Endothelial cell of umbilical vein (primary cell): ENCODE measurements at regions of chr18 and their contacts with region 1.

Region 1: GRCh38 chr18:70195852-70196434 is 9.5 kb downstream of the RTTN start:
- DNase-seq: peak; percentile 57
- H3K4me3 ChIP-seq: no peak overlapping the region
- H3K27ac ChIP-seq: no peak overlapping the region
- H3K4me1 ChIP-seq: no peaks in the 10 kb centered on the region
- H3K27me3 ChIP-seq: no peaks in the 10 kb centered on the region
- CTCF ChIP-seq: peak; percentile 62 to 64
- POLR2A ChIP-seq: no peak

Region 2: GRCh38 chr18:70172225-70172624 is 23.7 kb before region 1 on chr18:
- CTCF ChIA-PET with region 1: interaction called, 24 read pairs
- POLR2A ChIA-PET with region 1: interaction called, 8 read pairs
- dilution Hi-C with region 1: no loop called
- intact Hi-C with region 1: loop called (anchors 2 kb)
- DNase-seq: peak; percentile 27
- H3K4me3 ChIP-seq: no peak overlapping the region
- H3K27ac ChIP-seq: no peak overlapping the region
- H3K4me1 ChIP-seq: no peaks in the 10 kb centered on the region
- H3K27me3 ChIP-seq: no peaks in the 10 kb centered on the region
- CTCF ChIP-seq: peak; percentile 16 to 19
- POLR2A ChIP-seq: no peak

Region 3: DNA sequence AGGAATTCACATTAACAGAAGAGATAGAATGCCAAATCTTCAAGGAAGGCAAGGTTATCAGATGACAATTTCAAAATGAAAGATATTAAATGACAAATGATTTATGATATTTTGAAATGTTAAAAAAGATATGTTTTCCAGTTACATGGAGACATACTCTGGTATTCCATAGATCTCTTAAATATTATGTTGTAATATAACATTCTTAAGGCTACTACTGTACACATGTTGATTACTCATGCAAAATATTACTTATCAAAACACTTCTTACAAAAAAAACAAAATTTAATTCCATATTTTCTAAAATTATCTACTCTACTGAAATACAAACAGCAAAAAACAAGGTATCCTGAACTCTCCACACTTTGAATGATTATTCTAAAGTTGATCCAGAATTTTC is 13.4 kb before region 1 on chr18:
- CTCF ChIA-PET with region 1: interaction called, 22 read pairs
- POLR2A ChIA-PET with region 1: no interaction called
- dilution Hi-C with region 1: no loop called
- intact Hi-C with region 1: no loop called
- DNase-seq: no peak
- H3K4me3 ChIP-seq: no peak overlapping the region
- H3K27ac ChIP-seq: peak overlapping the region; percentile 42
- H3K4me1 ChIP-seq: peaks cover 19% of the 10 kb centered on the region
- H3K27me3 ChIP-seq: no peaks in the 10 kb centered on the region
- CTCF ChIP-seq: no peak
- POLR2A ChIP-seq: no peak

Region 4: DNA sequence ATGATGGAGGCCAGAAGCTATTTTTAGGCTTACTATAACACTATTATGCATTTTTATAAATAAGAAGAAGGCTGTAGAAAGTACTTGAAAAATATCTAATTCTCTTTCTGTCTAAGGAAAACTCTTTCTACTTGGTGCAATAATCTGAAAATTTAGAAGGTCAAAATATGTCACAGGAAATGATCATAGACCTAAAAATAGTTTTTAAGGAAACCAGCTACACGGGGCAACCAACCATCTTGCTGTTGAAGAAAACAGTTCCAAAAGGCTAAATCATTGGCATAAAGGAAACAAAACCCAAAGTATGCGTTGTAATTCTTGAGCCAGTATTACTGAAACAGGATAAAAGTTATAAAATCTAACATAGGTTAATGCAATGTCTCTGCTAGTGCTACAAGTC is 133.1 kb after region 1 on chr18:
- CTCF ChIA-PET with region 1: interaction called, 14 read pairs
- POLR2A ChIA-PET with region 1: no interaction called
- dilution Hi-C with region 1: no loop called
- intact Hi-C with region 1: no loop called
- DNase-seq: peak; percentile 73
- H3K4me3 ChIP-seq: no peak overlapping the region
- H3K27ac ChIP-seq: peak overlapping the region; percentile 40
- H3K4me1 ChIP-seq: peaks cover 13% of the 10 kb centered on the region
- H3K27me3 ChIP-seq: no peaks in the 10 kb centered on the region
- CTCF ChIP-seq: no peak
- POLR2A ChIP-seq: no peak

Region 5: GRCh38 chr18:70421471-70422390 is 225.8 kb after region 1 on chr18:
- CTCF ChIA-PET with region 1: interaction called, 23 read pairs
- POLR2A ChIA-PET with region 1: no interaction called
- dilution Hi-C with region 1: no loop called
- intact Hi-C with region 1: no loop called
- DNase-seq: peak; percentile 99
- H3K4me3 ChIP-seq: peak overlapping the region in 2 of 3 experiments; percentile 7 to 62
- H3K27ac ChIP-seq: peak overlapping the region; percentile 99
- H3K4me1 ChIP-seq: peaks cover 38% of the 10 kb centered on the region
- H3K27me3 ChIP-seq: no peaks in the 10 kb centered on the region
- CTCF ChIP-seq: no peak
- POLR2A ChIP-seq: no peak

Region 6: DNA sequence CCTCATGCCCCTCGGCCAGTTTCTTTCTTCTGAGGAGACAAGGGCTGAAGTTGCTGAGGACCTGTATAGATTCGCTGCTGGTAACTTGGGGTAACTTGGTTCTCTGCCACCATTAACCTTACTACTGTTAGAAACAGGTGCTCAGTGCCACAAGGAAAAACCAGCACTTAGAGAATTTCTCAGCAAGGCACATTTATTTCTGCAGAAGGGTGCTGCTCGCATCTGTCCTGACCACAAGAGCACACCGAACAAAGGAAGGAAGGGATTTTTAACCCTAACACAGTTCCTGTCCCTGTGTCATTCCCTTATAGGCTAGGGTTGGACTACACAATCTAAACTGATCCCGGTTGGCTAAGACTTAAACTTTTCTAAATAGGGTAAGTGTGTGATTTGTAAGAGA is 247.0 kb after region 1 on chr18:
- CTCF ChIA-PET with region 1: interaction called, 30 read pairs
- POLR2A ChIA-PET with region 1: no interaction called
- dilution Hi-C with region 1: no loop called
- intact Hi-C with region 1: no loop called
- DNase-seq: no peak
- H3K4me3 ChIP-seq: no peak overlapping the region
- H3K27ac ChIP-seq: no peak overlapping the region
- H3K4me1 ChIP-seq: no peaks in the 10 kb centered on the region
- H3K27me3 ChIP-seq: peaks cover 0 to 3% of the 10 kb centered on the region in 2 experiments
- CTCF ChIP-seq: no peak
- POLR2A ChIP-seq: no peak

Region 7: GRCh38 chr18:70448588-70448987 is 252.6 kb after region 1 on chr18:
- CTCF ChIA-PET with region 1: interaction called, 75 read pairs
- POLR2A ChIA-PET with region 1: no interaction called
- dilution Hi-C with region 1: no loop called
- intact Hi-C with region 1: loop called (anchors 1 kb)
- DNase-seq: no peak
- H3K4me3 ChIP-seq: no peak overlapping the region
- H3K27ac ChIP-seq: no peak overlapping the region
- H3K4me1 ChIP-seq: no peaks in the 10 kb centered on the region
- H3K27me3 ChIP-seq: no peaks in the 10 kb centered on the region
- CTCF ChIP-seq: no peak
- POLR2A ChIP-seq: no peak

Region 8: GRCh38 chr18:72197591-72197990 is 2001.6 kb after region 1 on chr18:
- CTCF ChIA-PET with region 1: no interaction called
- POLR2A ChIA-PET with region 1: no interaction called
- dilution Hi-C with region 1: no loop called
- intact Hi-C with region 1: no loop called
- DNase-seq: no peak
- H3K4me3 ChIP-seq: no peak overlapping the region
- H3K27ac ChIP-seq: no peak overlapping the region
- H3K4me1 ChIP-seq: no peaks in the 10 kb centered on the region
- H3K27me3 ChIP-seq: no peaks in the 10 kb centered on the region
- CTCF ChIP-seq: no peak
- POLR2A ChIP-seq: no peak